AG04450 (cell line): ENCODE measurements at regions of chr3 and their contacts with region 1.

Region 1: GRCh38 chr3:30693470-30694120 is 87.2 kb downstream of the TGFBR2 start:
- DNase-seq: peak; percentile 48
- H3K4me3 ChIP-seq: no peak overlapping the region
- H3K27ac ChIP-seq: no peak overlapping the region
- H3K27me3 ChIP-seq: no peaks in the 10 kb centered on the region
- CTCF ChIP-seq: peak; percentile 88

Region 2: GRCh38 chr3:30034246-30034991 is 659.2 kb before region 1 on chr3:
- CTCF ChIA-PET with region 1: interaction called, 100 read pairs
- POLR2A ChIA-PET with region 1: no interaction called
- DNase-seq: no peak
- H3K4me3 ChIP-seq: no peak overlapping the region
- H3K27ac ChIP-seq: no peak overlapping the region
- H3K27me3 ChIP-seq: no peaks in the 10 kb centered on the region
- CTCF ChIP-seq: no peak

Region 3: GRCh38 chr3:30112902-30113484 is 580.6 kb before region 1 on chr3:
- CTCF ChIA-PET with region 1: interaction called, 38 read pairs
- POLR2A ChIA-PET with region 1: no interaction called
- DNase-seq: peak; percentile 23
- H3K4me3 ChIP-seq: no peak overlapping the region
- H3K27ac ChIP-seq: no peak overlapping the region
- H3K27me3 ChIP-seq: no peaks in the 10 kb centered on the region
- CTCF ChIP-seq: peak; percentile 68

Region 4: DNA sequence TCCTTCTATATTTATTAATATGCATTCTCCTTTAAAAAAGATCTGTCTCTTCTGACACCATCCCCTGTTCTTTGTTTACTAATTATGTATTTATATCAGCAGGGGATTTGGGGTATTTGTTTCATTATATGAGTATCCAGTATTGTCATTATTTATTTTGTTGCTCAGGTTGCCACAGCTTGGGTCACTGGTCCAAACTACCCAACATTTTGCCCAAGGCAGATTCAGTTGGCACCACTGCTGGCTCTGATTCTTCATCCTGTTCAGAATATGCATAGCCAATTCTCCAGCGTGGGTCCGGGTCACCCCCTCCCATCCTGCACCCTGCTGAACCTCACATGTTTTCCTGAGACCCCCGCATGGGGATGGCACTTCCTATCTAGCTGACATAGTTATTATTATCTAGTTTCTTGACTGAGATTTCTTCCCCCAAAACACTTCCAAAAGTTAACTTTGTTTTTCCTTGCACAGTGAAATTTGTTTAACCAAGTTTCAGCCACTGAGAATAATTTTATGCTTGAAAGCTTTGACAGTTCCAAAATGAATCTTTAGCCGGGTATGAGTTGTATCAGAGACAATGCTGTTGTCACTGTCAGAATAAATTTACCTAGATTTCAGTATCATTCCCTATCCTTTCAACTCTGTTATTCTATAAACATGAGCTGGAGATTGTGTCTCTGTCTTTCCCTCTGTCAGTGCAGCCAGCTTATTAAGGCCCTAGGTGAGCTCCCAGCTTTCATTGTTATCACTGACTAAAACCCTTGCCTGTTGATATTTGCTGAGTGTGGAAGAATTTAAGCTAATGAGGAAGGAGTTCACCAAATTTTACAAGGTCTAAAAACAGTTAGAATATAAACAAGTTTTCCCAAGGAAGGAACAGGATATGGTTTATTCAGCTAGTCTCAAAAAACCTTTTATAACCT is 16.9 kb before region 1 on chr3:
- CTCF ChIA-PET with region 1: interaction called, 14 read pairs
- POLR2A ChIA-PET with region 1: no interaction called
- DNase-seq: no peak
- H3K4me3 ChIP-seq: no peak overlapping the region
- H3K27ac ChIP-seq: no peak overlapping the region
- H3K27me3 ChIP-seq: no peaks in the 10 kb centered on the region
- CTCF ChIP-seq: no peak

Region 5: GRCh38 chr3:30704931-30705890 is 11.6 kb after region 1 on chr3:
- CTCF ChIA-PET with region 1: interaction called, 20 read pairs
- POLR2A ChIA-PET with region 1: no interaction called
- DNase-seq: no peak
- H3K4me3 ChIP-seq: no peak overlapping the region
- H3K27ac ChIP-seq: no peak overlapping the region
- H3K27me3 ChIP-seq: no peaks in the 10 kb centered on the region
- CTCF ChIP-seq: no peak